ENCODE measurements at regions of chr15 and their contacts with region 1.

Region 1: GRCh38 chr15:63048115-63048775 is 5.7 kb downstream of the TPM1 start:
- DNase-seq: peak; percentile 90 to 95 (median 91)
- ATAC-seq: peak; percentile 28 to 83 (median 62)
- H3K4me3 ChIP-seq: peak overlapping the region; percentile 62 to 95 (median 84)
- H3K27ac ChIP-seq: peak overlapping the region; percentile 91 to 99 (median 96)
- H3K4me1 ChIP-seq: peaks cover 0 to 85% (median 49%) of the 10 kb centered on the region in 12 donors
- H3K27me3 ChIP-seq: peaks cover 0 to 40% (median 0%) of the 10 kb centered on the region in 9 donors
- CTCF ChIP-seq: peak; percentile 79 to 98 (median 91)
- POLR2A ChIP-seq: peak; percentile 24 to 96

Region 2: DNA sequence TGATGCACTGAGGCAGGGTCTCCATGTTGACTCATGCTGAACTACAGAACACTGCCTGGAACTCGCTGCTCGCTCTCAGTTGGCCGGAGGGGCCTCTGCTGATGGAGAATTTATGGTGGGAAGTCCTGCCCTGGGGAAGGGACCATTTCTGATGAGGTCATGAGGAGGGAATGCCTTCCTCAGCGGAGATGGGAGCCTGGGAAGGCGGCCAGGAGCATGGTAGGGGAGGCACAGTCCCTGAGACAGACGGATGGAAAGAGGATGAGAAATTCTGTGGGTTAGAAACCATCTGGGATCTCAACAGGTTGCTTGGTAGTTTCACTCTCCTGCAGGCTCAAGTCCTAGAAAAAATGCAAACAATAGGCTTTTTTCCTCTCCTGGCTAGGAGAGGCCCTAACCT is 62.5 kb before region 1 on chr15:
- intact Hi-C with region 1: no loop called
- DNase-seq: no peak
- ATAC-seq: no peak
- H3K4me3 ChIP-seq: no peak overlapping the region
- H3K27ac ChIP-seq: no peak overlapping the region
- H3K4me1 ChIP-seq: peaks cover 0 to 6% (median 0%) of the 10 kb centered on the region in 12 donors
- H3K27me3 ChIP-seq: no peaks in the 10 kb centered on the region
- CTCF ChIP-seq: no peak
- POLR2A ChIP-seq: no peak

Region 3: DNA sequence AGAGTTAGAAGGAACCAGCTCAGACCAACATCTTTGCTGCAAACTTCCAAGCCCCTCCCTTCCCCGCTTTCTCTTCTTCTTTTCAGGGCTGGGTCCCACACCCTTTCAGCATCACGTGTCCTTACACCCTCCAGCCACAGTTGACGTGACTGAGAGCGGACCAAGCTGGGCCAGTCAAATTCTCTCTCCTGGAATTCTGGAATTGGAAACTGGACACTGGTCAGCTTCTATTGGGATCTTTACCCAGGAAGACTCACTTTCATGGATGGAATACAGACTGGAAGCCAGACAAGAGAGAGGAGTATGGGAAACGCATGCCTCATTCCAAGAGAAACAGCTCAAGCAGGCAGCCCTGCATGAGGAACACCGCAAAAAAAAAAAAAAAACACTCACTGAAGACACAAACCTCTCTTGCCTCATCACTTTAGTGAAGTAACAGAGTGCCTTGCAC is 18.1 kb before region 1 on chr15:
- intact Hi-C with region 1: no loop called
- DNase-seq: peak in 2 of 5 donors; percentile 50 to 52
- ATAC-seq: peak; percentile 58 to 81 (median 76)
- H3K4me3 ChIP-seq: no peak overlapping the region
- H3K27ac ChIP-seq: peak overlapping the region in 1 of 12 donors; percentile 46
- H3K4me1 ChIP-seq: peaks cover 0 to 7% (median 0%) of the 10 kb centered on the region in 12 donors
- H3K27me3 ChIP-seq: no peaks in the 10 kb centered on the region
- CTCF ChIP-seq: no peak
- POLR2A ChIP-seq: no peak

Region 4: DNA sequence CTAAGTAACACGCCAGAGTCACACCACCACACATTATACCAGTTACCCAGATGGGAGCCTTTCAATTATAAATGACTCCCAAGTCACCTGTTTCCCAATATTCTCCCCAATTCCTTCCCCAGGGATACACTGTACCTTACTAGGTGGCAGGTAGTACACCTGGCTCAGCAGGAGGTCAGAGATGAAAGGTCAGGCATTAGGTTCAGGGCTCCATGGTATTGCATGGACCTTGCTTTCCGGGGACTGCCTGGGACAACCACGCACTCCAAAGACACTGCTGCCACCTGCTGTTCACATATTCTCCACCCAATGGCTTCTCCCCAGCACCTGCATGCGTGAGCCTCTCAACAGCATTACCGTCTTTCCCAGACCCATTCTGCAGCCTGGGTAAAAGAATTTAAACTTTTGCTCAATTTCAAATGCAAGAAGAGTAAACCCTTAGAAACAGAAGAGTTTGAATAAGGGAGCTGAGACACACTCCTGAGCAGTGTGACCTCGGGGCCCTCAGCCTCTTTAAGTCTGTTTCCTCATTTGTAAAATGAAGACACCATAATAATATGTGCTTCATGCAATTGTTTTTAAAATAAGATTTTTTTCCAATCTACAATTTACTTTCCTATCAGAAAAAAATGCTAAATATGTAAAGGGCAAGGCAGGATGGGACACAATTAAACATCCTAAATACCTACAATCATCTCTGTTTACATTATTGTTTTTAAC is 45.4 kb after region 1 on chr15:
- intact Hi-C with region 1: loop called (anchors 1 to 5 kb)
- DNase-seq: peak; percentile 81 to 87 (median 83)
- ATAC-seq: peak; percentile 91 to 95 (median 92)
- H3K4me3 ChIP-seq: no peak overlapping the region
- H3K27ac ChIP-seq: peak overlapping the region in 6 of 12 donors; percentile 41 to 67 (median 49)
- H3K4me1 ChIP-seq: peaks cover 0 to 28% (median 17%) of the 10 kb centered on the region in 12 donors
- H3K27me3 ChIP-seq: no peaks in the 10 kb centered on the region
- CTCF ChIP-seq: peak; percentile 75 to 96 (median 88)
- POLR2A ChIP-seq: no peak

Region 5: DNA sequence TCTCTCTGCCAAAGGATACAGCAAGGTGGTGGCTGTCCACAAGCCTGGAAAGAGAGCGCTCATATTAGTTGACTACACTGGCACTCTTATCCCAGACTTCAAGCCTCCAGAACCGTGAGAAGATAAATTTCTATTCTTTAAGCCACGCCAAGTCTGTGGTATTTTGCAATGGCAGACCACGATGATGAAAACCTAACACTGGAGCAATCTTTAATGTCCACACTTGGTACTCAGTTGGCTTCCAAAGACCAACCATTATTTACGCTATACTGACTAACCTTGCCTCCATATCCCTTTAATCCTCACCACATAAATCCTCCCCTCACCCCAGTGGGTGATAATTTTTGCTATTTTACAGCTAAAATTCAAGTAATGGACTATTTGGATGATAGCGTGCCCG is 56.5 kb after region 1 on chr15:
- intact Hi-C with region 1: no loop called
- DNase-seq: no peak
- ATAC-seq: no peak
- H3K4me3 ChIP-seq: no peak overlapping the region
- H3K27ac ChIP-seq: no peak overlapping the region
- H3K4me1 ChIP-seq: peaks cover 0 to 7% (median 0%) of the 10 kb centered on the region in 12 donors
- H3K27me3 ChIP-seq: no peaks in the 10 kb centered on the region
- CTCF ChIP-seq: no peak
- POLR2A ChIP-seq: no peak

Measured in heart left ventricle (tissue), 16 donors.